Gastrocnemius medialis (tissue), 4 donors: ENCODE measurements at regions of chr6 and their contacts with region 1.

Region 1: GRCh38 chr6:43758617-43759050 is 11.4 kb upstream of the VEGFA start:
- DNase-seq: no peak
- ATAC-seq: peak; percentile 62 to 72
- H3K4me3 ChIP-seq: no peak overlapping the region
- H3K27ac ChIP-seq: no peak overlapping the region
- H3K4me1 ChIP-seq: no peaks in the 10 kb centered on the region
- H3K27me3 ChIP-seq: no peaks in the 10 kb centered on the region
- CTCF ChIP-seq: peak; percentile 76 to 90 (median 82)
- POLR2A ChIP-seq: no peak

Region 2: DNA sequence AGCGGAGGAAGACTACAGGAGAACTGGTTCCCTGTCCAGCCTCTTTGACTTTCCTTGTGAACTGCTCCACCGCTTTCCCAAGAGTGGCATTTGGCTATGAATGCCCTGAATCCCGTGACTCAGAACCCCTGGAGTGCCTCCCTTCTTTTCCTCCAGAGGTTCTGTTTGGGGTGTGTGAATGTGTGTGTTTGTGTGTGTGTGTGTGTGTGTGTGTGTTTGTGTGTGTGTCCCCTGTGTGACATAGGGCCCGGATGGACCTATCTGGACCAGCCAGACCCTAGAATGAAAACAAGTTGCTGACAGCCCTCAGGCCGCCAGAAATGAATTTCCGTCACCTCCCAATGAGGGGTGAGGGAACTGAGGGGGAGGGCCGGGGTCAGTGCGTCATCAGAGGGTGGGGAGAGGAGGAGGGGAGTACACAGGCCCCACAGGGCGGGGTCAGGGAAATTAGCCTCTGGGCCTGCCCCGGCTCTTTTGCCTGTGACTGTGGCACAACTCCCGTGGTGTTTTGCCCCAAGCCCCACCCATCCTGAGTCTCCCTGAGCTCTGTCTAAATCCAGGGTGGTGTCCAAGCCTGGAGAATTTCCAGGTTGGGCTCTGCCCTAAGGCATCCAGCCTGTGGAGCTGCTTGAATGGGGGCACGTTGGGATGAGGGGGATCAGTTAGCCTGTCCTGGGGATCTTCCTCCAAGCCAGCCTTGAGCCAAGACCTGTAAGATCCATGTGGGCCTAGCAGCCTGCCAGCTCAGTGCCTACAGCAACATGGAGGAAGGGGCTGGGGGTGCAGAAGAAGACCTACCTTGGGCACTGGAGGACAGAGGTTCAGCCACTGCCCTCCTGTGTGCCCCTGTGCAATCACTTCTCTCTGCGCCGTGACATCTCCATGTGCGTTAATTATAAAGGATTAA is 55.8 kb before region 1 on chr6:
- in situ Hi-C with region 1: no loop called
- intact Hi-C with region 1: loop called (anchors 5 kb)
- DNase-seq: peak; percentile 80 to 88
- ATAC-seq: peak; percentile 68 to 74
- H3K4me3 ChIP-seq: no peak overlapping the region
- H3K27ac ChIP-seq: peak overlapping the region; percentile 79 to 84 (median 82)
- H3K4me1 ChIP-seq: peaks cover 37 to 55% of the 10 kb centered on the region in 2 donors
- H3K27me3 ChIP-seq: no peaks in the 10 kb centered on the region
- CTCF ChIP-seq: no peak
- POLR2A ChIP-seq: peak; percentile 46 to 67

Region 3: DNA sequence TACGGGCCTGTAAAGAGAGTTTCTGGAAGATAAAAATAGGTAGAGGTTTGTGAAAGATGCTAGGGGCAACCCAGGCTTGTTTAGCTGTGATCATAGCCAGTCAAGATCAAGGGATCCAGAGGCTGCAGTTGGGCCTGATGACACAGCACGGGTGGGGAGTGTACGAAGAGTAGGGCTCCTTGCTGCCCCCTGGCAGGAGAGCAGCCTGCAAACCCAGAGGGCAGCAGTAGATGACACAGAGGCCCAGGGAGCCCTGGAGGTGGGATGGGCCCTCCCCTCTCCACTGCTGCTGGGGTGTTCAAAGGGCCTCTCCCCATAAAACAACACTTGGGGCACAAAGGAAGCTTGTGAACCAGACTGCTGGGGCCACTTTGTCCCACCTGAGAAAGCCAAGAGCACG is 58.6 kb after region 1 on chr6:
- in situ Hi-C with region 1: no loop called
- intact Hi-C with region 1: no loop called
- DNase-seq: peak; percentile 48 to 80
- ATAC-seq: peak; percentile 52 to 88
- H3K4me3 ChIP-seq: no peak overlapping the region
- H3K27ac ChIP-seq: peak overlapping the region in 3 of 4 donors; percentile 27 to 33 (median 33)
- H3K4me1 ChIP-seq: peaks cover 6 to 10% of the 10 kb centered on the region in 2 donors
- H3K27me3 ChIP-seq: no peaks in the 10 kb centered on the region
- CTCF ChIP-seq: peak; percentile 13 to 57 (median 43)
- POLR2A ChIP-seq: no peak

Region 4: GRCh38 chr6:43887340-43887858 is 128.8 kb after region 1 on chr6:
- in situ Hi-C with region 1: no loop called
- intact Hi-C with region 1: no loop called
- DNase-seq: no peak
- ATAC-seq: peak in 1 of 2 donors; percentile 29
- H3K4me3 ChIP-seq: no peak overlapping the region
- H3K27ac ChIP-seq: peak overlapping the region in 3 of 4 donors; percentile 1 to 28 (median 6)
- H3K4me1 ChIP-seq: peaks cover 22 to 24% of the 10 kb centered on the region in 2 donors
- H3K27me3 ChIP-seq: no peaks in the 10 kb centered on the region
- CTCF ChIP-seq: no peak
- POLR2A ChIP-seq: no peak